ENCODE measurements at regions of chr14 and their contacts with region 1.

Region 1: GRCh38 chr14:96100161-96101029 is 61.2 kb downstream of the C14orf132 start:
- DNase-seq: no peak
- H3K4me3 ChIP-seq: no peak overlapping the region
- H3K27ac ChIP-seq: peak overlapping the region in 1 of 4 donors; percentile 8
- H3K4me1 ChIP-seq: peaks cover 19 to 46% (median 28%) of the 10 kb centered on the region in 3 donors
- H3K27me3 ChIP-seq: no peaks in the 10 kb centered on the region
- CTCF ChIP-seq: peak; percentile 81 to 96 (median 89)
- POLR2A ChIP-seq: no peak

Region 2: DNA sequence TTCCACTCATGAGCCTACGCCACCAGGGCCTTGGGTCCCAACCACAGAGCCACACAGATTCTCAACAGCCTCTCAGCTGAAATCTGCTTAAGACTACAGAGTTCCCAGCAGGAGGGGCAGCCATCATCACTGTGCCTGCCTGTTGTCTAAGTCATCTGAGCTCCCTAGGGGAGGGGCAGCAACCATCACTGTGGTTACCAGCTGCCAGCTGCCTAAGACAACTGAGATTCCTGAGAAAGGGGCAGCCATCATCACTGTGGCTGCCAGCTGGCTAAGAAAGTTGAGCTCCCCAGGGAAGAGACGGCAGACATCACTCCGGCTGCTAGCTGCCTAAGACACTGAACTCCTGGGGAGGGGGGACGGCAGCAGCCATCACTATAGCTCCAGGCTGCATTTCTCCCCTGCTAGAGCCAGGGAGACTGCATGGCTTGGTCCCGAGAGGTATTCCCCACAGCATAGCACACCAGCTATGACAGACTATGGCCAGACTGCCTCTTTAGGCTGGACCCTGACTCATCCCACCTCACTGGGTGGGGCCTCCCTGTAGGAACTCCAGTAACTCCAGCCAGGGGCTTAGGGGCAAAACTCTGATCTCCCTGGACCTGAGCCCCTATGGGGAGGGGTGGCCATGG is 98.4 kb before region 1 on chr14:
- intact Hi-C with region 1: loop called (anchors 5 kb)
- DNase-seq: no peak
- H3K4me3 ChIP-seq: no peak overlapping the region
- H3K27ac ChIP-seq: no peak overlapping the region
- H3K4me1 ChIP-seq: no peaks in the 10 kb centered on the region
- H3K27me3 ChIP-seq: peaks cover 0 to 30% (median 0%) of the 10 kb centered on the region in 4 donors
- CTCF ChIP-seq: no peak
- POLR2A ChIP-seq: no peak

Region 3: GRCh38 chr14:96204151-96205058 is 104.0 kb after region 1 on chr14 and contains the start of gene BDKRB2:
- intact Hi-C with region 1: loop called (anchors 10 kb)
- DNase-seq: no peak
- H3K4me3 ChIP-seq: peak within 1 kb of the TSS; percentile 65 to 75 (median 68)
- H3K27ac ChIP-seq: peak within 1 kb of the TSS; percentile 91 to 97 (median 96)
- H3K4me1 ChIP-seq: peaks cover 22 to 77% (median 33%) of the 10 kb centered on the region in 3 donors
- H3K27me3 ChIP-seq: peaks cover 0 to 17% (median 0%) of the 10 kb centered on the region in 4 donors
- CTCF ChIP-seq: no peak
- POLR2A ChIP-seq: peak in 3 of 4 donors; percentile 46 to 88 (median 86)
- total RNA-seq, gene BDKRB2: 18.8 to 31.2 (median 20.0) TPM

Region 4: DNA sequence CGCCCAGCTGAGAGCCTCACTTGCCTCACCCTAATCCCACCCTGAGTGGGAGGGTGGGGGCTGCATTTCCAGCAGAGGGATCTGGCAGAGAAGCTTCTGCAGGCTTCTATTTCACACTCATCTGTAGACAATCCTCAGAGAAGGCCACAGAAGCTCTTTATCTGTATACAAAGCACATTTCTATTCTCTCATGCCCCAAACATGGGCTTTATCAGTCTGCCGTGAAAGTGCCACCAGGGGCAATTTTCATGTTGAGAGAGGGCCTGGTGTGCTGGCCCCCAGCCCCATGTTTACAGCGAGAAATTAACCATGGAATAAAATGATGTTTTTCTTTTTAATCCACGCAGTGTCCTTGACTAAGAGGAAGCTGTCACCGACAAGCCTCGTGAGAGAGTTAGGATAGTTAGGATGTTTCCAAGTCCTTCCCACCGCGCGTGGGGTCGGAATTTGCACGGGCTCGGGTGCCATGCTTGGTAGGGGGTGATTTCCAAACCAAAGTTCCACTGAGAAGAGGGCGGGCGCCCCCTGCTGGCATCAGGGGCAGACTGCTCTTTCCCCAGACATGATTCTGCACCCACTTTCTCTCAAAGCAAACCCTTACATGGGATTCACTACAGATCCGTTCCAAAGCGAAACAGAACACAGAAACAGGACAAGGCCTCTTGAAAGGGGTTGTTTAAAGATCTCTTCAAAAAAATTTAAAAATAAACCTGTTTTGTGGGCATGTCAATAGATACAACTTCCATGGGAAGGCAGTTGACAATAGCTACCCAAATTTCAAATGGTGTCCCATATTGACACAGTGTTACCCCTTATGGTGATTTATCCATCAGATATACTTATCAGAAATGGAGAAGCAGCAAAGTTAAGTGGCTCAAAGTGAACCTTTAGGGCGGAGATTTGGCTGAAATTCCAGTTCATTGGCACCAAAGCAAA is 175.1 kb after region 1 on chr14:
- intact Hi-C with region 1: loop called (anchors 2 kb)
- DNase-seq: no peak
- H3K4me3 ChIP-seq: no peak overlapping the region
- H3K27ac ChIP-seq: peak overlapping the region in 2 of 4 donors; percentile 21 to 38
- H3K4me1 ChIP-seq: peaks cover 7 to 37% (median 12%) of the 10 kb centered on the region in 3 donors
- H3K27me3 ChIP-seq: no peaks in the 10 kb centered on the region
- CTCF ChIP-seq: peak; percentile 64 to 97 (median 92)
- POLR2A ChIP-seq: no peak